Vagina (tissue), 2 donors: ENCODE measurements at regions of chr13 and their contacts with region 1.

Region 1: DNA sequence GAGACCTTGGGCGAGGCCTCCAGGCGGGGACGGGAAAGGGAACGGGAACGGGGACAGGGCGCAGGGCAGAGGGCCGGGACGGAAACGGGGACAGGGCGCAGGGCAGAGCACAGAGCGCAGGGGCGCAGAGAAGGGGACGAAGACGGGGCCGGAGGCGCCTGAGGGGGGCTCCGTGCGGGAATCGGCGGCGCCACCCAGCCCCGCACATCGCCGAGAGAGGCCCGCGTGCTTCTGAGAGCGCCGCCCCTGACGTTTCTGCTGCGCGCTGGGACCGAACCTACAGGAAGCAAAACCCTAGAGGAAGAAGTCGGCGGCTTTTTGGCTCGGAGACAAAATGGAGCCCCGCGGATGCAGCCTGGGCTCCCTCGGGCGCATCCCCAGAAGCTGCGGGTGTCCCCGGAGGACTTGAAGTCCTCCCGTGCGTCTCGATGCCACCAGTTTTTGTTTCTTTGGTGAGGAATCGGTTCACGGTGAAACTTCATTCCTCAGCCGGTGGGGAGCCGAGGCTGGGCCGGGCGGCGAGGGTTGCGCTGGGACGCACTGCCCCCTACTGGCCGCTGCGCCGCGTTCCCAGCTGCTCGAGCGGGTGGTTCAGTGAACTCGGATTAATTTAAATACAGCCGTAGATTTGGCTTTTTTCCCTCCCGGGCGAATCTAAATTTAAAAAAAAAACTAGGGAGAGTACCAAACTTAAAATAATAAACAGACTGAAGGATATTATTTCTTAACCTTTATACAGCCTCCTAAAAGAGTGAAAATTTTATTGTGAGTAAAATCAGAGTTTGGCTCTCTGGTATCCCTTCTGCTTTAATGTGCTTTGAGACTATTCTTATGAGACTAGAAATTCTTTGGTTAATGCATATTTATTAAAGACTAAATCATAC is 350.0 kb upstream of the ARGLU1 start:
- DNase-seq: no peak
- H3K4me3 ChIP-seq: peak overlapping the region; percentile 48 to 76
- H3K27ac ChIP-seq: peak overlapping the region; percentile 89
- H3K4me1 ChIP-seq: no peaks in the 10 kb centered on the region
- H3K27me3 ChIP-seq: no peaks in the 10 kb centered on the region
- CTCF ChIP-seq: peak; percentile 49 to 93 (median 83)
- POLR2A ChIP-seq: no peak

Region 2: DNA sequence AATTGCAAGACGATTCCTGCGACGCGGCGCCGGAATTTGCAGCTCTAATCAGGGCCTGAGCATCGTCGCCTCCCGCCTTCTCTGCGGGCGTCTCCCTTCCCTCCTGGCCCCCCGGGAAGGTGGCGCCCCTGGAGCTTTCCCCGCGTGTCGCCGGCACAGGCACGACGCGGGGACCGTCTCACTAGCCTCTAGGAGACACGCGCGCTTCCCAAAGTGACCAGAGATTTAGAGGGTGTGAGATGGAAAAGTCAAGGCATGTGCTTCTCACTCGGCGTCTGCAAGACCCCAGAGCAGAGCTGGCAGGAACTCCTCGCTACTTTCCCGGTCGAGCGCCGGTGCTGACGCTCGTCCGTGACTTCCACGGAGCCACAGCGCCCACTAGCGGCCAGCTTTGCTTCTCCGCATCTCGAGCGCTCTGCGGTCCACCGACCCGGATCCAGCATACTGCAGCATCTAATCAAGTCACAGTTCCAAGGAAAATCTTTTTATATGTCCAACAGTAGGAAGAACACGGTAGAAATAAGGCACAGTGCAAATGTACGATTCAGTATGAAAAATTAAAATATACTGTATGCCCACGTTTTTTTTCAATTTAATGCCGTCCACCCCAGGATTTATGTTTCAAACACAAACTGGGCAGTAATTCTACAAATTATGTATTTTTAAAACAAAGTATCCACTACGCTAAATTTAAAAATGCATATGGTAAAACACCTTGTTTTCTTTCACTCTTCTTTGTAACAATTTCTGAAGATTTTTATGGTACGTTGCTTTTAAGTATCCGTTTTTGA is 381.5 kb before region 1 on chr13:
- intact Hi-C with region 1: loop called (anchors 10 kb)
- DNase-seq: no peak
- H3K4me3 ChIP-seq: peak overlapping the region; percentile 74 to 83
- H3K27ac ChIP-seq: peak overlapping the region; percentile 95
- H3K4me1 ChIP-seq: peaks cover 23% of the 10 kb centered on the region
- H3K27me3 ChIP-seq: no peaks in the 10 kb centered on the region
- CTCF ChIP-seq: peak; percentile 86 to 88 (median 86)
- POLR2A ChIP-seq: no peak

Region 3: DNA sequence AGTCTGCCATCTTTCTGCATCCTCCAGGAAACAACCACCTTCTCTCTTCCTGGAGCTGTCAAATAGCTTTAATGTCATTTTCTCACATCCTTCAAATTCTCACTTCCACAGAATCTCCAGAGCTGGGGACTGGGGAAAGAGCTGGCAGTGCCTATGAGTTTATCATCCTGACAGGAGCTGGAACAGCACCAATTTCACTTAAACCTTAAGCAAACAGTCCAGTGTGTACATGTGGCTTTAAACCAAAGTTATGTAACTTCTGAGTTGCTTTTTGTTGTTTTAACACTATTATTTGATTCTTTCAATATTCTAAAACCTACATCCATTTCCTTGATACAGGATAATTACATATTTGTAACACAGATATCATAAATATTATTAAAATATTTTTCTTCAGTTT is 18.5 kb before region 1 on chr13:
- intact Hi-C with region 1: no loop called
- DNase-seq: no peak
- H3K4me3 ChIP-seq: no peak overlapping the region
- H3K27ac ChIP-seq: no peak overlapping the region
- H3K4me1 ChIP-seq: no peaks in the 10 kb centered on the region
- H3K27me3 ChIP-seq: no peaks in the 10 kb centered on the region
- CTCF ChIP-seq: no peak
- POLR2A ChIP-seq: no peak